Activated CD4-positive, alpha-beta memory T cell treated with anti-CD3 and anti-CD28 coated beads, Interleukin-2, amount 10 ng/mL, durations not matched to agents 7 days and 5 days (primary cell): ENCODE measurements at regions of chr22 and their contacts with region 1.

Region 1: DNA sequence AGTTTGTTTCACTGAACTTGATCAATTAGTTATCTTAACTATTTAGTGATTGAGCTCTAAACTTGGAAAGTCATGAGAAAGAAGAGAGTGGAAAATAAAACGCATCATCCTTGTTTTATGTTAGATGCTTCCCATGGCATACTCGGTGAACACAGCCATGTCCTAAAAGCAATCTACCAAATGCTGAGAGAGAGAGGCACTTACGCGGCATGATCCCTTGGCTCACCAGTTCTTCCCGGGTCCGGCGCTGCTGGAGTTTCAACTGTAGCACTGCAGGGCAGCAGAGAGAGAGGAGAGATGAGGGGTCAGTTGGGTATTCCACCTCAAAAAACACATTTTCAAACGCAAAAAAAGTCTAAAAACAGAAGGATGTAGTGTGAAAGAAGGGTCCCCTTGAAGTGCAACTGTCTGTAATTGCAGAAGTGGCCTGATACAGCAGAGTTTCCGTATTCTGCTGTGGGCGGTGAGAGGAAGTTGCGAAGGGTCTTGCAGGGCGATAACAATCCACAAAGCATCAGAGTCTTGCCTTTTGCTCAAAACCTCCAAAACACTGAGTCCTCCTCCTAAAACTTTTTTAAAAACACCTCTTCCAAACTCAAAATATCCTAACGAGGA is 92.7 kb downstream of the SGSM3 start:
- DNase-seq: peak; percentile 62
- H3K4me3 Mint-ChIP-seq: peak overlapping the region; percentile 97
- H3K27ac Mint-ChIP-seq: peak overlapping the region; percentile 96
- H3K4me1 Mint-ChIP-seq: peaks cover 47% of the 10 kb centered on the region
- H3K27me3 Mint-ChIP-seq: no peaks in the 10 kb centered on the region

Region 2: DNA sequence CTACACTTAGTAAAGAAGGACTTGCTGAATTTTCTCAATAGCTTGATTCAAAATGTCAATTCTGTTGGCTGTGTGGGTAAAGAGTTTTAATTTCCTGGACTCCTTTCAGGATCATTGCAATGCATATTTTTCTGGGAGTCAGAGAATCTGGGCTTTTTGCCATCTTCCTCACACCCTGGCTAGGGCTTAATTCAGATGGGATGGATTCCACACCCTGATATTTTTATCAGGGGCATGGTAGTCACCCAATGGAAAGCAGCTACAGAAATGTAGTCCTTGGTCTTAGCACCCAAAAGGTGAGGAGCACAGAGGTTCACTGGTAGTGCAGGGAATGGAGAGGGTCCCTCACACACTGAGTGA is 13.5 kb before region 1 on chr22:
- CTCF ChIA-PET with region 1: interaction called, 3 read pairs
- POLR2A ChIA-PET with region 1: interaction called, 19 read pairs
- DNase-seq: no peak
- H3K4me3 Mint-ChIP-seq: no peak overlapping the region
- H3K27ac Mint-ChIP-seq: no peak overlapping the region
- H3K4me1 Mint-ChIP-seq: peaks cover 37% of the 10 kb centered on the region
- H3K27me3 Mint-ChIP-seq: no peaks in the 10 kb centered on the region

Region 3: GRCh38 chr22:40473703-40474102 is 10.6 kb after region 1 on chr22:
- CTCF ChIA-PET with region 1: interaction called, 3 read pairs
- POLR2A ChIA-PET with region 1: interaction called, 29 read pairs
- DNase-seq: no peak
- H3K4me3 Mint-ChIP-seq: no peak overlapping the region
- H3K27ac Mint-ChIP-seq: no peak overlapping the region
- H3K4me1 Mint-ChIP-seq: peaks cover 30% of the 10 kb centered on the region
- H3K27me3 Mint-ChIP-seq: no peaks in the 10 kb centered on the region

Region 4: DNA sequence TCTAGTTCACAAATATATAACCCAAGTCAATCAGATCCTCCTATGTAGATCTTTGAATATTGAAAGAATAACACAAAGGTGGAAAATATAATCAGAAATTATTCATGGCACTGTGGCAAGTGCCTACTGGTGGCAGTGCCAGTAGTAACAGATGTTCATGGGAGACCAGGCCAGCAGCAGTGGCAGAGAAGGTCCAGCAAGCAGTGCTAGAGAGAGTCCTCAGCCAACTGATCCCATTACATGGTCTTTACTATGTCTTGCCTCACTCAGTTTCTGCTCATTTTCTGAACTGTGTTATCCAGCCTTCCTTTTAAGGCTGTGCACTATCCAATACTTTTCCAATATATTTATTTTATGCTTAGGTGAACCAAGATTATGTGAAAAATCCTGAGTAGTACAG is 48.5 kb after region 1 on chr22:
- CTCF ChIA-PET with region 1: no interaction called
- POLR2A ChIA-PET with region 1: no interaction called
- DNase-seq: no peak
- H3K4me3 Mint-ChIP-seq: no peak overlapping the region
- H3K27ac Mint-ChIP-seq: no peak overlapping the region
- H3K4me1 Mint-ChIP-seq: no peaks in the 10 kb centered on the region
- H3K27me3 Mint-ChIP-seq: no peaks in the 10 kb centered on the region

Region 5: DNA sequence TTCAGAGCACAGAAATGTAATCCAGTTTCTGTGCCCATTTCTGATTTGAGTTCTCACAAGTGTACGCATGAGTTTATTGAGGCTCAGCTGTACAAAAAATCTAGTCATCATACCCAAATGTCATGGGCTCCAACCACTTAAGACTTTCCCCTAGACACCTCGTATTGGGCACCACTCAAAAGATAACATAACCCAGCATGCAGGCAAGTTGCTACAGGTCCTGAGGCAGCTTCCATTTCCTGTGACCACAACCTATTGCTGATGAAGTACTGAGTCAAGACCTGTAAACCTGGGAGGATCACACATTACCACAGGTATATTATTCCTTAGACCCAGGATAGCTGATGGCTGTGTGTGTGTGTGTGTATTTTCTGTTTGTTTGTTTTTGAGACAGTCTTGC is 78.2 kb after region 1 on chr22:
- CTCF ChIA-PET with region 1: no interaction called
- POLR2A ChIA-PET with region 1: no interaction called
- DNase-seq: peak; percentile 26
- H3K4me3 Mint-ChIP-seq: no peak overlapping the region
- H3K27ac Mint-ChIP-seq: no peak overlapping the region
- H3K4me1 Mint-ChIP-seq: peaks cover 16% of the 10 kb centered on the region
- H3K27me3 Mint-ChIP-seq: no peaks in the 10 kb centered on the region